ENCODE measurements at regions of chr2 and their contacts with region 1.

Region 1: DNA sequence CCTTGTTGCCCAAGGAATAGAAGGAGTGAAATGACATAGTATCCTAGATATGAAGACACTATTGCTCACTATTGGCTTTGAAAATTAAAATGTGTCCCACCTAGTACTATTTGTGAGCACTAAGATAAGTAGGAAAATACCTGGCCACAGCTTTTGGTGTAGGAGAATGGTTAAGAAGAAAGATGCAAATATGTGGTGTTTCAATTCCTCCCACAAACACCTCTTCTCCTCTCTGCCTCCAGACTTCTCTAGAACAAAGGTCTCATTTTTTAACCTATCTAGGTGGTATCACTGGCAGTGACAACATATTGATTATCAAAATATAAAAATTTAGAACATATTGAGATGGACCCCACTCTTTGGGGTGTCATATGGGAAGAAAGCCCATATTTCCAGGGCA is 929.9 kb upstream of the FANCL start:
- DNase-seq: no peak
- H3K4me3 ChIP-seq: no peak overlapping the region
- H3K27ac ChIP-seq: no peak overlapping the region
- H3K4me1 ChIP-seq: no peaks in the 10 kb centered on the region
- H3K27me3 ChIP-seq: no peaks in the 10 kb centered on the region
- CTCF ChIP-seq: no peak
- POLR2A ChIP-seq: no peak

Region 2: GRCh38 chr2:60223859-60224258 is 1052.8 kb after region 1 on chr2:
- intact Hi-C with region 1: loop called (anchors 5 kb)
- DNase-seq: no peak
- H3K4me3 ChIP-seq: no peak overlapping the region
- H3K27ac ChIP-seq: no peak overlapping the region
- H3K4me1 ChIP-seq: no peaks in the 10 kb centered on the region
- H3K27me3 ChIP-seq: no peaks in the 10 kb centered on the region
- CTCF ChIP-seq: no peak
- POLR2A ChIP-seq: no peak

Measured in breast epithelium (tissue), 4 donors.